ENCODE measurements at regions of chr9 and their contacts with region 1.

Region 1: GRCh38 chr9:76932757-76933156 is 26.8 kb upstream of the PRUNE2 start:
- DNase-seq: no peak
- H3K4me3 ChIP-seq: no peak overlapping the region
- H3K27ac ChIP-seq: no peak overlapping the region
- H3K4me1 ChIP-seq: no peaks in the 10 kb centered on the region
- H3K27me3 ChIP-seq: peaks cover 5% of the 10 kb centered on the region
- CTCF ChIP-seq: no peak

Region 2: DNA sequence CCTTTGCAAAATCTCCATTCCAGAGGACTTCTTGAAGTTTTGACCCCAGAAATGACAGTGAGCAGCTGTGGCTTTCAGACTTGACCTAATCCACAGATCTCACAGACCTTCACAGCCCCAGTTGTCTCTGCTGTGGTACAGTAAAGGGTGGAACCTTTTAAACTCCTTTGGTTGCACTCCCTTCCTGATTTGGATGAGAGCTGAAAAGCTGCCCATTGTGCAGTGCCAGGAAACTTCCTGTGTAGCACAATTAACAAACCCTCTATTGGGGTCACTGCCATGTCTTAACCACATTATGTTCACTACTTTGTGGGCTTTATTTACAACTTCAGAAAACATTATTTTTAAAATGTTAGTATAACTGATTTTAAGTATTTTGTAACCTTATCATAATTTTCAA is 1099.0 kb before region 1 on chr9:
- CTCF ChIA-PET with region 1: no interaction called
- POLR2A ChIA-PET with region 1: interaction called, 15 read pairs
- intact Hi-C with region 1: no loop called
- DNase-seq: no peak
- H3K4me3 ChIP-seq: no peak overlapping the region
- H3K27ac ChIP-seq: no peak overlapping the region
- H3K4me1 ChIP-seq: no peaks in the 10 kb centered on the region
- H3K27me3 ChIP-seq: no peaks in the 10 kb centered on the region
- CTCF ChIP-seq: no peak

Region 3: GRCh38 chr9:76658535-76659231 is 274.1 kb before region 1 on chr9:
- CTCF ChIA-PET with region 1: no interaction called
- POLR2A ChIA-PET with region 1: no interaction called
- intact Hi-C with region 1: no loop called
- DNase-seq: peak; percentile 25
- H3K4me3 ChIP-seq: no peak overlapping the region
- H3K27ac ChIP-seq: no peak overlapping the region
- H3K4me1 ChIP-seq: peaks cover 9% of the 10 kb centered on the region
- H3K27me3 ChIP-seq: peaks cover 4% of the 10 kb centered on the region
- CTCF ChIP-seq: peak; percentile 57

Measured in A673 (cell line).